ENCODE measurements at regions of chr18 and their contacts with region 1.

Region 1: GRCh38 chr18:9136315-9137155 is at the start of gene ANKRD12:
- DNase-seq: peak; percentile 94 to 99 (median 98)
- ATAC-seq: peak; percentile 70
- H3K4me3 ChIP-seq: peak within 1 kb of the TSS; percentile 83
- H3K4me3 Mint-ChIP-seq: peak within 1 kb of the TSS; percentile 98
- H3K27ac ChIP-seq: peak within 1 kb of the TSS; percentile 94 to 96
- H3K27ac Mint-ChIP-seq: peak within 1 kb of the TSS; percentile 99
- H3K4me1 ChIP-seq: peaks cover 24% of the 10 kb centered on the region
- H3K4me1 Mint-ChIP-seq: peaks cover 75% of the 10 kb centered on the region
- H3K27me3 ChIP-seq: no peaks in the 10 kb centered on the region
- H3K27me3 Mint-ChIP-seq: no peaks in the 10 kb centered on the region
- CTCF ChIP-seq: no peak
- total RNA-seq, gene ANKRD12: 160 to 164 TPM

Region 2: DNA sequence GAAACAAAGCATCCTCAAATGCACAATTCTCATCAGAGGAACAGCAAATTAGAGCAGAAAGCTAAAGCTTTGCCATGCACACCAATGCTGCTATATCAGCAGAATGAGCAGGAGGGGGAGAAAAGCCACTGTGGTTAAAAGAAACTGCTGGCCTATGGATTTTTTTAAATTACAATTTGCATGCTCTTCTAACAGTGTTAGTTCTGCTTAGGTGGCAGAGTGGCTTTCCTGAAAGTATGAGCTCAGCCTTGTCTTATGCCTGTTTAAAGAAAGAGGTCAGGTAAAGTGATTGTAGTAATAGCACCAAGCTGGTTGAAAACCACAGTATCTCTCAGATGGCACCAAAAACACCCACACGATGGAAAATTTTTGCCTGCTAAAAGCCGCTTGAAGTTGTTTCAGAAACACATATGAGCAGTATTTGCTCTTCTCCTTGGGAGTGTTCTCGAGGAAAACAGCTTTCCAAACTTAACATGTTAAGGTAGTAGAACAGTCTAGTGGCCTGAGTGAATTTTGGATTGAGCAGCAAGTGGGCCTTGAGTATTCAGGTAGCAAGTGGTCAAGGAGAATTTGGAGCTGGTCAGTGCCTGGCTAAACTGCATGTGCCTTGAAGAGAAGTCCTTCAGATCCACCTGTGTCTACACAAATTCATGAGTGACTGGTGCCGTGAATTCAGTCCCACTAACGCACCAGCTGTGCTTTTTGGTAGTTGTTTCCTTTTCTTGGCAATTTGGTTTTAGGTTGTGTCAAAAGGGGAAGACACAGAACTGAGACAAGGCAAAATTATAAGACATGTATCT is 53.6 kb before region 1 on chr18:
- CTCF ChIA-PET with region 1: interaction called, 5 read pairs
- POLR2A ChIA-PET with region 1: interaction called, 31 read pairs
- intact Hi-C with region 1: no loop called
- DNase-seq: peak in 6 of 14 experiments; percentile 8 to 78 (median 52)
- ATAC-seq: peak; percentile 85
- H3K4me3 ChIP-seq: peak overlapping the region; percentile 1
- H3K4me3 Mint-ChIP-seq: peak overlapping the region; percentile 69
- H3K27ac ChIP-seq: peak overlapping the region; percentile 60 to 68
- H3K27ac Mint-ChIP-seq: peak overlapping the region; percentile 88
- H3K4me1 ChIP-seq: peaks cover 33% of the 10 kb centered on the region
- H3K4me1 Mint-ChIP-seq: peaks cover 28% of the 10 kb centered on the region
- H3K27me3 ChIP-seq: no peaks in the 10 kb centered on the region
- H3K27me3 Mint-ChIP-seq: no peaks in the 10 kb centered on the region
- CTCF ChIP-seq: no peak

Region 3: DNA sequence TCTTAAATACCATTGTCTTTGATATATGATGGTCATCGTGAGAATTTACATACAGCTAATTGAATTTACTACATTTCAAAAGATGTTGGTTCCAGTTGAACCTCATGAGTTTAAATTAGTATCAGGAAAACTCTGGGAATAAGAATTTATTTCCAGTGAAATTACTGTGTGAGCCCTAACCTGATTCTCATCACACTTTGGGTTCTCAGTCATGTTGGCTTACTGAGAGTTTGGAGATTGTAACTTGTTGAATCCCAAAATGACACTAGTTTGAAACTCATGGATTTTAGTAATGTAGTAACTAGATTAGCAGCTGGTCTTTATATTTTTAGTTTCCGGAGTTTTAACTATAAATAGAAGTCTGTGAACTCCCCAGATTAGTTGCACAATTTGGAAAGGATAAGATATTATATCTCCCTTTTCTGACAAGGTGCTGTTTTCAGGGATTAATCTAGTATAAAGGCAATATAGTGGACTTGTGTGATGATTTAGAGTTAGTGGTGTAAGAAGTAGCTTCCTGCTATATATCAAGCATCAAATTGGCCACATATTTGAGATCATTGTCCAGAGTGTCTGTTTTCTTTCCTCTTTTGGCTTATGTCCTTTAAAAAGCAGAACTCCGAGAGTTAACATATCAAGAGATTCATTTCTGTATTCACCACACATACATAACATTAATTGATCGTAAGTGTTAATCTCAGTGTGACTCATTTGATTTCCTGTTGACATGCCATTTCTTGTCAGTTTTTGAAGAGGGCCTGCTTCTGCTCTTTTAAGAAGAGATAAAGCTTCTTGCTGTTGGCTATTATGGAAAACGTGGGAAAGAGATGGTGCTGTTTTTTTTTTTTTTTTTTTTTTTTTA is 18.3 kb before region 1 on chr18:
- CTCF ChIA-PET with region 1: interaction called, 5 read pairs
- POLR2A ChIA-PET with region 1: interaction called, 914 read pairs
- intact Hi-C with region 1: loop called (anchors 1 to 2 kb)
- DNase-seq: peak in 3 of 14 experiments; percentile 75 to 85 (median 79)
- ATAC-seq: peak; percentile 57
- H3K4me3 ChIP-seq: peak overlapping the region; percentile 54
- H3K4me3 Mint-ChIP-seq: peak overlapping the region; percentile 84
- H3K27ac ChIP-seq: peak overlapping the region; percentile 77 to 94
- H3K27ac Mint-ChIP-seq: peak overlapping the region; percentile 95
- H3K4me1 ChIP-seq: peaks cover 27% of the 10 kb centered on the region
- H3K4me1 Mint-ChIP-seq: peaks cover 91% of the 10 kb centered on the region
- H3K27me3 ChIP-seq: no peaks in the 10 kb centered on the region
- H3K27me3 Mint-ChIP-seq: no peaks in the 10 kb centered on the region
- CTCF ChIP-seq: no peak

Region 4: GRCh38 chr18:9147440-9148202 is 11.1 kb after region 1 on chr18:
- CTCF ChIA-PET with region 1: interaction called, 10 read pairs
- POLR2A ChIA-PET with region 1: interaction called, 22 read pairs
- intact Hi-C with region 1: no loop called
- DNase-seq: peak in 7 of 14 experiments; percentile 18 to 81 (median 44)
- ATAC-seq: peak; percentile 74
- H3K4me3 ChIP-seq: no peak overlapping the region
- H3K4me3 Mint-ChIP-seq: no peak overlapping the region
- H3K27ac ChIP-seq: no peak overlapping the region
- H3K27ac Mint-ChIP-seq: peak overlapping the region; percentile 10
- H3K4me1 ChIP-seq: peaks cover 28% of the 10 kb centered on the region
- H3K4me1 Mint-ChIP-seq: peaks cover 85% of the 10 kb centered on the region
- H3K27me3 ChIP-seq: no peaks in the 10 kb centered on the region
- H3K27me3 Mint-ChIP-seq: no peaks in the 10 kb centered on the region
- CTCF ChIP-seq: peak; percentile 76

Region 5: DNA sequence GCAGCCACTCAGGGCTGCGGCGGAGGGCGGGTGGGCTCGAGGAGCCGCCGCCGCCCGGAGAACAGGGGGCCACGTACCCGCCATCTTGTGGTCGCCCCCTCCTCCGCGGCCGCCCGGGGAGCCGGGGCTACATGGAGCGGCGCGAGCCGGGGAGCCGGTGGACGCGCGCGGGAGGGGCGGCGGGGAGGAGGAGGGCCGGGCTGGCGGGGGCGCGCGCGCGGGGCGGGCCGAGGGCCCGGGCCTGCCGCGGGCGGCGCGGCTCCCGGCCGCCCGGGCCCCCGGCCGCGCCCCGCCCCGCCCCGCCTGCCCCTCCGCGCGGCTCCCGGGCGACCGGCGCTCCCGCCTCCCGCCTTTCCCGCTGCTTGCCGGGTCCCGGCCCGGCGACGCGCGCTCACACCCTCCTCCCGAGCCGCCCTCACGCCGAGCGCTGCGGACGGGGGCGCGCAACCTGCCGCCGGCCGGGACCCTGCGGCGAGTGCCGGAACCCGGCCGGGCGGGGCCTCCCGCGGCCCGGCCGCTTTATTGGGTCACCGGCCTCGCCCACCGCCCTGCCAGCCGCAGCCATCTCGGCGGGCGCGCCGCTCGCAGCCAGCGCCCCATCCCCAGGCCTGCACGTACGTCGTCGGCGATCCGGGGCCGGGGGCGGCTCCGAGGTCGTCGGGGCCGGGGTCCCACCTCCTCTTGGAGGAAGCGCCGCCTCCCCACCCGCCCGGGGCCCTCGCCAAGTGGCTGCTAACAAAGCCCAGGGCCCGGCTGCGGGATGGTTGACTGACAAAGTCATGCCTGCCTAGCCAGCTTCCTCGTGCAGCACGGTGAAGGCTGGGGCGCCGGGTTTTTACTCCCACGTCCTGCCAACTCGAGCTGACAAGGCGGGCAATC is 478.1 kb after region 1 on chr18 and contains the start of gene PPP4R1:
- CTCF ChIA-PET with region 1: no interaction called
- POLR2A ChIA-PET with region 1: no interaction called
- intact Hi-C with region 1: loop called in 1 of 2 experiments (anchors 10 kb)
- DNase-seq: peak; percentile 40 to 86 (median 66)
- ATAC-seq: peak; percentile 53
- H3K4me3 ChIP-seq: peak within 1 kb of the TSS; percentile 79
- H3K4me3 Mint-ChIP-seq: peak within 1 kb of the TSS; percentile 97
- H3K27ac ChIP-seq: peak within 1 kb of the TSS; percentile 33 to 53
- H3K27ac Mint-ChIP-seq: peak within 1 kb of the TSS; percentile 88
- H3K4me1 ChIP-seq: peaks cover 21% of the 10 kb centered on the region
- H3K4me1 Mint-ChIP-seq: peaks cover 37% of the 10 kb centered on the region
- H3K27me3 ChIP-seq: no peaks in the 10 kb centered on the region
- H3K27me3 Mint-ChIP-seq: no peaks in the 10 kb centered on the region
- CTCF ChIP-seq: no peak
- total RNA-seq, gene PPP4R1: 35.7 to 40.2 TPM